ENCODE measurements at regions of chr18 and their contacts with region 1.

Region 1: GRCh38 chr18:74081966-74082741 is 65.5 kb downstream of the FBXO15 start:
- DNase-seq: peak in 8 of 10 donors; percentile 52 to 95 (median 71)

Region 2: GRCh38 chr18:74023220-74023619 is 58.9 kb before region 1 on chr18:
- intact Hi-C with region 1: loop called (anchors 10 kb)
- DNase-seq: no peak

Measured in posterior cingulate gyrus (tissue), 11 donors.